HCT116 (cell line): ENCODE measurements at regions of chr12 and their contacts with region 1.

Region 1: GRCh38 chr12:123365025-123365917 is 624 bp upstream of the SBNO1 start:
- DNase-seq: peak; percentile 98
- ATAC-seq: peak; percentile 88
- H3K4me3 ChIP-seq: peak overlapping the region; percentile 60 to 87
- H3K27ac ChIP-seq: peak overlapping the region; percentile 85
- H3K4me1 ChIP-seq: peaks cover 11 to 30% of the 10 kb centered on the region in 2 experiments; a peak in 3 of 4 replicates
- H3K27me3 ChIP-seq: no peaks in the 10 kb centered on the region
- CTCF ChIP-seq: peak; percentile 45 to 85 (median 82); a peak in 5 of 6 replicates
- POLR2A ChIP-seq: peak; percentile 65
- RAD21 ChIP-seq: peak; percentile 68

Region 2: DNA sequence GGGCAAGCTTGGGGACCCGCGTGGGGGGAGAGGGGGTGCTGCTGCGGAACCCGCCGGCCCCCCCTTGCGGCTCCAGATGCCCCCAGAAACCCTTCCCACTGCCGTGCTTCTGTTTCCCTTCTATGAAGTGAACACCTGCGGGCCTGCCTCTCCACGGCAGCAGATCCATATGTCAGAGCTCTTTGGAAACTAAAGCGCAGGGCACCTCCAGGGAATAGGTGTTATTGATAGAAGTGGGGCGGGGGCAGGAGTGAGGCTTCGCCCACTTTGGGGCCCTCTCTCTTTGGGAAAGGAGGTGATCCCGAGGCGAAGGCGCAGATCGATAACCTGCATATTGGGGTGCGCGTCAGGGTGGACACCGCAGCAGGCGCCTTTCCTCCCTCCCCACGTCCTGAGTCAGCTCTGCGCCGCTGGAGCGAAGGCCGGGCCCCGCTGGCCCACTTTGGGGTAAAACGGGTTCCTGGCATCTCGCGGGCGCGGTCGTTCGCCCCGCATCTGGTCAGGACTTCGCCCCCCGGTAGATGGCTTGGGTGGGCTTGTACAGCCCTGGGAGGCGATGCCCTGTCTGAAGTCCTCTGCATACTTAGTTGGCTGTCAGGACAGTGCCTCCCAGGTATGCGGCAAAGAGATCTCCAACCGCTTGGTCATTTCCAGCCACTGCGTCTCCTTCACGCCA is 19.2 kb after region 1 on chr12:
- CTCF ChIA-PET with region 1: interaction called, 27 read pairs
- POLR2A ChIA-PET with region 1: interaction called, 35 read pairs
- RAD21 ChIA-PET with region 1: interaction called, 6 to 8 read pairs
- intact Hi-C with region 1: loop called (anchors 1 kb)
- DNase-seq: no peak
- ATAC-seq: peak; percentile 4
- H3K4me3 ChIP-seq: peak overlapping the region; percentile 90 to 96
- H3K27ac ChIP-seq: peak overlapping the region; percentile 66
- H3K4me1 ChIP-seq: peaks cover 23 to 36% of the 10 kb centered on the region in 2 experiments
- H3K27me3 ChIP-seq: no peaks in the 10 kb centered on the region
- CTCF ChIP-seq: no peak
- POLR2A ChIP-seq: no peak
- RAD21 ChIP-seq: no peak